H1 (cell line): ENCODE measurements at regions of chr19 and their contacts with region 1.

Region 1: DNA sequence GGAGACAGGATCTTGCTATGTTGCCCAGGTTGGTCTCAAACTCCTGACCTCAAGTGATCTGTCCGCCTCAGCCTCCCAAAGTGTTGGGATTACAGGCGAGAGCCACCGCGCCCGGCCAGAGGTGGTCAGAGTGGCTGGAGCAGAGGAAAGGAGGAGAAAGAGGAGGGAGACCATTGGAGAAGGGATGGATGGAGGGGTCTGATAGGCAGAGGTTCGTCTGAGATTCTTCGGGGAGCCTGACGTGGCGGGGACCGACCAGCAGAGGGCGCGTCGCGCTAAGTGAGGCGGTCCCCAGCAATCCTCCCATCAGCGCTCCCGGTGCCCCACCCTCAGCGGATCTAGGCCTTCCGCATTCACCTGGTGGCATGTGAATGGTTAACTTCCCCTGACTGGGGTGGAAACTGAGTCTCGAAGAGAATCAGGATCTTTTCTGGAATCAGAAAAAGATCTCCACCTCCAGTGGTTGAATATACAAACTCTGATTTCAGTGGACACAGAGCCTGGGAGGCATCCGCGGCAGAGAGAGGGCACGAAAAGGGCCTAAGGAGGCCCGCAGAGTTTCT is 8.8 kb downstream of the GTPBP3 start:
- DNase-seq: peak; percentile 63 to 98
- H3K4me3 ChIP-seq: no peak overlapping the region
- H3K27ac ChIP-seq: no peak overlapping the region
- H3K4me1 ChIP-seq: peaks cover 0 to 4% (median 3%) of the 10 kb centered on the region in 4 experiments; a peak in 3 of 7 replicates
- H3K27me3 ChIP-seq: no peaks in the 10 kb centered on the region
- CTCF ChIP-seq: peak; percentile 91 to 95 (median 93)
- EP300 ChIP-seq: no peak
- POLR2A ChIP-seq: no peak
- RAD21 ChIP-seq: peak; percentile 76 to 78

Region 2: DNA sequence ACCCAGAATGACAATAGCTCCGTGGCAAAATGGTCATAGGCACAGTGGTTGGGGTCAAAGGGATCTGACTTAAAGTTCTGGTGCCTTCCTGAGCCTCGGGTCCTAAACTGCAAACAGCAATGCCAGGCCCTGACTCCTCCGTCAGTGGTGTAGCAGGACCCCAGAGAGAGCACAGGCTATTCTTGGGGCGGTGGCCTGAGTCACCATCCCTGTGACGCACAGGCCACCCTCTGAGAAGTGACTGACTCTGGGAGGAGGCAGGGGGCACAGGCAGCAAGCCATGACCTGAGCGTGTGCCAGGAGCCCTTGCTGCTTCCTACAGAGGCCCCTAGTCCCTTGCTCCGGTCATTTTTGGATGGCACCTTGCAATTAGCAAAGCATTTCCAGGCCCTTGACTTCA is 12.2 kb after region 1 on chr19:
- CTCF ChIA-PET with region 1: interaction called, 41 read pairs
- POLR2A ChIA-PET with region 1: interaction called, 3 read pairs
- DNase-seq: no peak
- H3K4me3 ChIP-seq: no peak overlapping the region
- H3K27ac ChIP-seq: no peak overlapping the region
- H3K4me1 ChIP-seq: no peaks in the 10 kb centered on the region
- H3K27me3 ChIP-seq: no peaks in the 10 kb centered on the region
- CTCF ChIP-seq: no peak
- EP300 ChIP-seq: no peak
- POLR2A ChIP-seq: no peak
- RAD21 ChIP-seq: no peak

Region 3: DNA sequence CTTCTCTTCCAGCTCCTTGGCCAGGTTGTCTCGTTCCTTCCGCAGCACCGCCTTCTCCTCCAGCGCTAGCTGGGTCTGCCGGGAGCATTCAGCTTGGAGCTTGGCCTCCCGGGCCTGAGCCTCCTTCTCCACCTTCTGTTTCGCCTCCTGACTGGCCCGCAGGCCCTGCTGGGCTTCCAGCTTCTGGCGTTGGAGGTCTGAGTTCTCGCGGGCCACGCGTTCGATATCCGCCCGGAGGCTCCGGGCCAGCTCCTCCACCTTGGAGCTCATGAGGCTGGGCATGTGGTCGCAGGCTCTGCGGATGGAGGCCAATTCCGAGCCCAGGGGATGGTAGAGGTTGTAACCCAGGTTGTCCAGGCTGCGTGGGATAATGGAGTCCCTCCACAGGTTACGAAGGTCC is 19.2 kb after region 1 on chr19:
- CTCF ChIA-PET with region 1: interaction called, 41 read pairs
- POLR2A ChIA-PET with region 1: interaction called, 5 read pairs
- DNase-seq: no peak
- H3K4me3 ChIP-seq: no peak overlapping the region
- H3K27ac ChIP-seq: no peak overlapping the region
- H3K4me1 ChIP-seq: no peaks in the 10 kb centered on the region
- H3K27me3 ChIP-seq: no peaks in the 10 kb centered on the region
- CTCF ChIP-seq: no peak
- EP300 ChIP-seq: no peak
- POLR2A ChIP-seq: no peak
- RAD21 ChIP-seq: no peak

Region 4: DNA sequence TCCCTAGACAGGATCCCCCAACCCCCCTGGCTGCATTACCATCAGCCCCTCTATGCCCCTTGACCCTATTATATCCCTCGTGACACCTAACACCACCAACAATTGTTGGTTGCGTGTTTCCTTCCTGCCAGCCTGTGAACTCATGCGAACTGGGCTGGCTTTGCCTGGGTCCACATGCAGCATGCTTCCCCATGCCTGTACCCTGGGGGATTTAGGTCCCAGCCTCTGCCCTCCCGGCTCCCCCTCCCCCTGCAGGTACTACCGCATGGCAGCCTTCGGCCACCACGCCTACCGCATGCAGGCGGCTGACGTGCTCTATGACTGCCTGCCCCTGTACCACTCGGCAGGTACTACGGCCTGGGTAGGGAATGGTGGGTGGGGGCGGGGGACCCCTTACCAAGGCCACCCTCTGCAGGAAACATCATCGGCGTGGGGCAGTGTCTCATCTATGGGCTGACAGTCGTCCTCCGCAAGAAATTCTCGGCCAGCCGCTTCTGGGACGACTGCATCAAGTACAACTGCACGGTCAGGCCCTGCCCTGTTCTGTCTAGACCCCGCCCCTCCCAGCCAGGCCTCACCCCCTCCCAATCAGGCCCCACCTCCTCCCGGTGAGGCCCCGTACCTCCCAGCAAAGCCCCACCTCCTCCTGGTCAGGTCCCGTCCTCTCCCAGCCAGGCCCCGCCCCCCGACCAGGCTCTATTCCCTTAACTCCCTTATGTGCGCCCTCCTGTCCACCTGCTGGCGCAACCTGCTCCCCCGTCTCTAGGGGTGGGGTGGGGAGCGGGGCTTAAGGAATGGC is 142.6 kb after region 1 on chr19:
- CTCF ChIA-PET with region 1: no interaction called
- POLR2A ChIA-PET with region 1: no interaction called
- DNase-seq: peak; percentile 96 to 97
- H3K4me3 ChIP-seq: peak overlapping the region; percentile 14 to 65 (median 50); a peak in 7 of 8 replicates
- H3K27ac ChIP-seq: no peak overlapping the region
- H3K4me1 ChIP-seq: peaks cover 0 to 19% (median 15%) of the 10 kb centered on the region in 4 experiments; a peak in 6 of 7 replicates
- H3K27me3 ChIP-seq: no peaks in the 10 kb centered on the region
- CTCF ChIP-seq: peak; percentile 71 to 86 (median 84)
- EP300 ChIP-seq: no peak
- POLR2A ChIP-seq: peak; percentile 29 to 71; a peak in 2 of 3 replicates
- RAD21 ChIP-seq: peak; percentile 48 to 58